ENCODE measurements at regions of chr3 and their contacts with region 1.

Region 1: DNA sequence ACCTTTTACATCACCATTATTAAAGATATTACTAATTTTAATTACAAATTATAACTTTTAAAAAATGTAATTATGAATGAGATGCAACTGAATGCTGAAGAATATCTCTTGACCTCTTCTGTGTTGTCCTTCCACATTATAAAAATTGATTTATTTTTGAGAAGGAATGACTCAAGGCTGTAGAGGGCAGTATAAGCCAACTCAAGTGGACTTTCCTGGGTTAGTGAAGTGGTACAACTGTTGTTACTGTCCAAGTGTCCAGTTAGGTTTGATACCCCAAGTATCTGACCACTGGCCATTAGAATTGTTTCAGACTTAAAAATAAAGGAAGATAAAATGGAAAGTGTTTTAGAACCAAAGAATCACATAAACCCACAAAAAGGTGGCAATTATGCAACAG is 51.9 kb downstream of the BBX start:
- DNase-seq: no peak

Region 2: GRCh38 chr3:107633327-107634098 is 58.9 kb after region 1 on chr3:
- intact Hi-C with region 1: no loop called
- DNase-seq: no peak

Region 3: DNA sequence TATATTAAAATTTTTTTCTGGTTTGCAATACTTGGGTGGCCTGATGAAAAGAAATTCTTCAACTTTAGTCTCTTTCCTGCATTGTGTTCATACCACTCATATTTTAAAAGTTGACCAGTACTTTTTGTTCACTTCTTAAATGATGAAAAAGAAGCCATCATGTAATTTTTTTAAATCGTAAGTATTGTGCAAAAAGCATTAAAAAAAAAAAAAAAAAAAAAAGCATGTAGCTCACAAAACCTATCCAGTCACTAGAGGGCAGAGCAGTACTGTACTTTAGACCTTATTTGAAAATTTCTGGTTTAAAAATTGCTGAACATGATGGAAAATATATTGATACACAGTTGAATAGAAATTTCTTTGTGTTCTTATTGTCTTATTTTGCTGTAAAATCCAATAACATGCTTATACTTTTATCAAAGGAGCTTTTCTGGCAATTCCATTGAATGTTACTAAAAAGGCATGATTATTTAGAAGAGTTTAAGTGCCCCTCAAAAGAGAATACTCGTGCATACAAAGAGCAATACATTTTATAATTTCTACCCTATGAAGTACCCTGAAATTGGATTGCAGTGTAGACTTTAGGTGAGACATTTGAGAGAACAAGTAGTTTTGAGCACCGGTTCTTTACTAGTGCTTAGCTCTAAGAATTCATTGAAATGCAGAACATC is 85.8 kb after region 1 on chr3:
- intact Hi-C with region 1: loop called (anchors 5 kb)
- DNase-seq: no peak

Region 4: DNA sequence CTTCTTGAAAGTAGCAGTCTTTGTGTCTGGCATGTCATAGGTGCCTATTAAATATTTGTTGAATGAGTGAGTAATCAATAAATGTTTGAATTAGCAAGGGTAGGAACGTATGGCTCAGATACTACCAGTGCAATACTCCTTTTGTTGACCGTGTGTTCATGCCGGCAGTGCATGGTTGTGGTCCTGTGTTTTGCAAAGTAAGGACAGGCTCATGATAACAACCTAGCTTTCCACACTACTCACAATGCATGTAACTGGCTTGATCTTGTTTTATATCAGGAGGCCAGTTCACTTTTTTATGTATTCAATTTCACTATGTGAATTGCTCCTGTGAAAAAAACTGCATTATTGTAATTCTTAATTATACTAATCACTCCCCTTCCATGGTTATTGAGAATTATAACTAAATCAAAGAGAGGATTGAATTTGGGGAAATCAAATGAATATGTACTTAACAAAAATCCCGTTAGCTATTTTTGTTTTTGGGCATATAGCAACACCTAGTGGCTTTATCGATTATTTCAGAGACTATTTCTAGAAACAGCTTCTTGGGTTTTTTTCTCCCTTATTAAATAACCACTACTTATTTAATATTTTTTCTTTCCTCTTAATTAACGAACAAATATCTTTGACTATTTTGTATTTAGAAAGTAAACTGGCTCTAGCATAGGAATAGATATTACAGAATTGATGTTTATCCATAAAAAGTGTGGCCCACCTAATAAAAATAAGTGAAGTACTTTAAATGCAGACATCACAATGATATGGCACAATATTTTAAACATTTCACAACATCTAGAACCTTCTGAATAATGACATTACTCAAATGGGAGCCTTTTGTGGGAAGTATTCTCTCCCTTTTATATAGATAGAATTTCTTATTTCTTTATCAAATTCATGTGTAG is 166.6 kb after region 1 on chr3:
- intact Hi-C with region 1: loop called (anchors 10 kb)
- DNase-seq: no peak

Region 5: DNA sequence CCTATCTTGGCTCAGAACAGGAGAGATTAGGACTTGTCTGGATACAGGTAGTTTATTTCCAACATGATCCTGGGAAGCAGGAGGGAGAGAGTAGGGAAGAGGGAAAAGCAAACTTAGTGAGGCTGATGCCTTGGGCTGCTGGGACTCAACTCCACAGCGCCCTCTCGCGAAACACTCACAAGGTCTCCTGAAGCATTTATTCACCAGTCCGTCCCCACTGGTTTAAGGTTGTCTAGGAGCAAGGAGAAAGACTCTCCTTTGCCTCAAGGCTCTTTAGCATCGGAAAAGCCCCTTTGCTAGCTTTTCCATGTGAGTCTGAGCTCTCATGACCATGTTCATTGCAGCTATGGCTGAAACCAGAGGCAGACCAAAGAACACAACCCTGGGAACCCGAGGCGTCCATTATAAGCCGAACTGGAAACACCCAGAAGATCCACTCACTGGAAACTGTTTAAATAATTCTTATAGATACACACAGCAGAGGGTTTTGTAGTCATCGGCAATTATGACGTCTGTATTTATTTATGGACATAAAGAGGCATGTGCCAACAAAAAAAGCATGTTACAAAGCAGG is 271.7 kb after region 1 on chr3:
- intact Hi-C with region 1: loop called (anchors 5 kb)
- DNase-seq: no peak

Region 6: DNA sequence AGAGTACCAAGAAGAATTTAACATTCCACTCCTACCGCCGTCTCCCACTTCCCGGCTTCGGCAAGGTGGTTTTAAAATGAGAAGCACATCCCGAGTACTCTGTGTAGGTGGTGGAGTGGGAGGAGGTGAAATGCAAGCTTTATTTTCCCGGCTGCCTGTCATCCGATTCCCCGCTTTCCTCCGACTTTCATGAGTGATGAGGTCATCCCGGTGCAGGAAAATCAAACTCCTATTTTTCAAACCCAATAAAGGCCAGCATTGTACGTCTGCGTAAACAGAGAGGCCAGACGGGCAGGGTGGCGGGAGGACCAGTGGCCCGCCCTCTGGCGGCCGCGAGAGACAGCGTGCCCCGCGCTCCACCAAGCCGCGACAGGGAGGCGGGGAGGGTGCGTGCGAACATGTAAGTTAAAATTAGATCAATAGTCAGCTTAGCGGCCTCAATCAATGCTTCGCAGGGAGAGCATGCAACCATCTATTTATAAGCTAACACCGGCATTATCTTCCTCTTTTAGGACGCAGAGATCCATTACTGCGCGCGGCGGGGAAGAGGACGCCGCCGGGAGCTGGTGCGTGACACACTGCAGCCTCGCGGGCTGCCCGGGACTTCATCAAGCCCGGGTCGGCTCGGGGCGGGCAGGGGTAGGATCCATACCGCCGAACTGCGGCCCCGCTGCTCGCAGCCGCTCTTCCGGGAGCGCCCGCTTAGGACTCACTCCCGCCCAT is 352.9 kb after region 1 on chr3:
- intact Hi-C with region 1: loop called (anchors 5 kb)
- DNase-seq: peak; percentile 83

Region 7: GRCh38 chr3:107969994-107970819 is 395.6 kb after region 1 on chr3:
- intact Hi-C with region 1: no loop called
- DNase-seq: no peak